ENCODE measurements at regions of chr11 and their contacts with region 1.

Region 1: DNA sequence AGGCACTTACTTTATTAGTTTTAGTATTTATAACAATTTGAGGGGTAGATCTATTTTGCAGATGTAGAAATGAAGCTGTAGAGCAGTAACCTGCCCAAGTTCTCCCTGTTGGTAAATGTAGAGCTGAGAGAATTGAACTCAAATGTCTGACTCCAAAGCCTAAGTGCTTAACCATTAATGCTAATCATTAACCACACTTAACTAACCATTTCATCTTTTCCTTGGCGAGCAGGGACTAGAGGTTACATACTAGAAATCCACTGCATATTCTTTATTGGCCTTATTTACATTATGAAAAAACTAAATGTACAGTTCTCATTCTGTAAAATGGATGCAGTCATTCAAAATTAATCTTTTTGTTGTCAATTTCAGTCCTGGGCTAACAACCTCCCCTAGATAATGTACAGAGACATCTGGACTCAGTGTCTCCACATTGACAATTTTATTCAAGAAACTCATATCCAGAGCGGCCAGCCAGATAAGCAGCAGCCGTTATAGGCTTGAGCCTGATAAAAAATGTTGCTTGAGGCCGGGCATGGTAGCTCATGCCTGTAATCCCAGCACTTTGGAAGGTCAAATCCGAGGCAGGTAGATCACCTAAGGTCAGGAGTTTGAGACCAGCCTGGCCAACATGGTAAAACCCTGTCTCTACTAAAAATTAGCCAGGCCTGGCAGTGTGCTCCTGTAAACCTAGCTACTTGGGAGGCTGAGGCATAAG is 76.7 kb upstream of the PICALM start:
- DNase-seq: no peak
- H3K4me3 ChIP-seq: no peak overlapping the region
- CTCF ChIP-seq: no peak

Region 2: GRCh38 chr11:86068951-86069407 is 76.6 kb before region 1 on chr11 and contains the start of gene PICALM:
- in situ Hi-C with region 1: loop called (anchors 5 kb)
- DNase-seq: peak; percentile 89
- H3K4me3 ChIP-seq: peak within 1 kb of the TSS; percentile 94
- CTCF ChIP-seq: no peak

Region 3: GRCh38 chr11:86101941-86102407 is 43.6 kb before region 1 on chr11:
- in situ Hi-C with region 1: no loop called
- DNase-seq: no peak
- H3K4me3 ChIP-seq: no peak overlapping the region
- CTCF ChIP-seq: no peak

Region 4: GRCh38 chr11:86230921-86231430 is 85.4 kb after region 1 on chr11:
- in situ Hi-C with region 1: no loop called
- DNase-seq: no peak
- H3K4me3 ChIP-seq: no peak overlapping the region
- CTCF ChIP-seq: no peak

Measured in astrocyte of the cerebellum (primary cell).